ENCODE measurements at regions of chr4 and their contacts with region 1.

Region 1: GRCh38 chr4:174467107-174467506 is 55.2 kb downstream of the HPGD start:
- DNase-seq: no peak
- H3K4me3 ChIP-seq: no peak overlapping the region
- H3K27ac ChIP-seq: no peak overlapping the region
- H3K27me3 ChIP-seq: peaks cover 0 to 5% (median 0%) of the 10 kb centered on the region in 45 donors
- CTCF ChIP-seq: no peak

Region 2: GRCh38 chr4:174418640-174419260 is 48.4 kb before region 1 on chr4:
- intact Hi-C with region 1: no loop called
- DNase-seq: no peak
- H3K4me3 ChIP-seq: no peak overlapping the region
- H3K27ac ChIP-seq: no peak overlapping the region
- H3K27me3 ChIP-seq: peaks cover 0 to 7% (median 0%) of the 10 kb centered on the region in 45 donors
- CTCF ChIP-seq: no peak

Region 3: GRCh38 chr4:174429668-174430410 is 37.3 kb before region 1 on chr4:
- intact Hi-C with region 1: loop called in 1 of 2 experiments (anchors 5 kb)
- DNase-seq: no peak
- H3K4me3 ChIP-seq: no peak overlapping the region
- H3K27ac ChIP-seq: no peak overlapping the region
- H3K27me3 ChIP-seq: peaks cover 0 to 4% (median 0%) of the 10 kb centered on the region in 45 donors
- CTCF ChIP-seq: no peak

Region 4: DNA sequence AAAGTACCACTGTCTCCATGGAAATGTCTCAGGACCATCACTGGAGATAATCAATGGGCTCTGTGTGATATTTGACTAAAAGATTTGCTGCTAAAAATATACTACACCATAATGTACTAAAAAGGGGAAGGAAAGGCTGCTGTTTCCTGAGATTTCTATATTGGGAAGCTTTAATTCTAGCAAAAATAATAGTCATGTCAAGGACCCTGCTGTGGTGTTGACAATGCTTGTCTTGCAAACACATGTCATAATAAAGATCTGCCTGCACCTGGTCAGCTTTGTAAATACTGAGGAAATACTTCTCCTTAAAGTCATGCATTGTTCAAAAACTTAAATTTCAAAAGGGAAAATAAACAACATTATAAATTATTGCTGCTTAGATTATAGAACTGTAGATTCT is 927.1 kb after region 1 on chr4:
- intact Hi-C with region 1: no loop called
- DNase-seq: no peak
- H3K4me3 ChIP-seq: no peak overlapping the region
- H3K27ac ChIP-seq: no peak overlapping the region
- H3K27me3 ChIP-seq: no peaks in the 10 kb centered on the region
- CTCF ChIP-seq: no peak

Measured in dorsolateral prefrontal cortex (tissue), 120 donors.